ENCODE measurements at regions of chr5 and their contacts with region 1.

Region 1: GRCh38 chr5:113053603-113054002 is 77.0 kb downstream of the DCP2 start:
- DNase-seq: peak; percentile 56 to 82 (median 71)
- H3K4me3 ChIP-seq: no peak overlapping the region
- H3K27ac ChIP-seq: peak overlapping the region in 1 of 2 donors; percentile 20
- H3K4me1 ChIP-seq: peaks cover 6% of the 10 kb centered on the region
- H3K27me3 ChIP-seq: no peaks in the 10 kb centered on the region
- CTCF ChIP-seq: no peak
- EP300 ChIP-seq: no peak
- POLR2A ChIP-seq: no peak

Region 2: DNA sequence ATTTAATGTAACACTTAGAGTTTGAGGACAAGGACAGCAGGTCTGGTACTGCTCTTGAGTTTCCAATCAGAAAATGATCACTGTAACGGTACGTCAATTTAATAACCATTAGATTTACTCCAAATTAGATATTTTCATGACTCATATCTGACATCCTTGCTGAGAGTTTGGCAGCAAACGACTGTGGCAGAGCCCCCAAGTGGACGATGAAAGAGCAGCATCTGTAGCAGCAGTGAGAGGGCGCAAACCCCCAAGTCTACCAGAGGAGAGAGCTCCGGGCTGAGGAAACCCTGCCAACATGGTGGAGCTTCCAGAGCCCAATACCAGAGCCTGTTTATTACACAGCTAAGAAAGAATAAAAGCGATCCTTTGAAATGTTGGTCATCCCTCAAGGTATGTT is 561.3 kb before region 1 on chr5:
- intact Hi-C with region 1: no loop called
- DNase-seq: no peak
- H3K4me3 ChIP-seq: no peak overlapping the region
- H3K27ac ChIP-seq: no peak overlapping the region
- H3K4me1 ChIP-seq: no peaks in the 10 kb centered on the region
- H3K27me3 ChIP-seq: no peaks in the 10 kb centered on the region
- CTCF ChIP-seq: no peak
- EP300 ChIP-seq: no peak
- POLR2A ChIP-seq: no peak

Region 3: DNA sequence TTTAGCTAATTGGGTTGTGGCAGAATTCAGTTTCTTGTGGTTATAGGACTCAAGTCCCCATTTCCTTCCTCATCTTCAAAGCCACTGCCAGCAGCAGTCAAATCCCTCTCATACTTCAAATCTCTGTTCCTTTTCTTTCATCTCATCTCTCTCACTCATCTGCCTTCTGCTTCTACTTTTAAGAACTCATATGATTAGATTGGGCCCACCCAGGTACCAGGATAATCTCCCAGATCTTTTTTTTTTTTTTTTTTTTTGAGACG is 123.6 kb before region 1 on chr5:
- intact Hi-C with region 1: no loop called
- DNase-seq: no peak
- H3K4me3 ChIP-seq: no peak overlapping the region
- H3K27ac ChIP-seq: no peak overlapping the region
- H3K4me1 ChIP-seq: no peaks in the 10 kb centered on the region
- H3K27me3 ChIP-seq: no peaks in the 10 kb centered on the region
- CTCF ChIP-seq: no peak
- EP300 ChIP-seq: no peak
- POLR2A ChIP-seq: no peak

Region 4: DNA sequence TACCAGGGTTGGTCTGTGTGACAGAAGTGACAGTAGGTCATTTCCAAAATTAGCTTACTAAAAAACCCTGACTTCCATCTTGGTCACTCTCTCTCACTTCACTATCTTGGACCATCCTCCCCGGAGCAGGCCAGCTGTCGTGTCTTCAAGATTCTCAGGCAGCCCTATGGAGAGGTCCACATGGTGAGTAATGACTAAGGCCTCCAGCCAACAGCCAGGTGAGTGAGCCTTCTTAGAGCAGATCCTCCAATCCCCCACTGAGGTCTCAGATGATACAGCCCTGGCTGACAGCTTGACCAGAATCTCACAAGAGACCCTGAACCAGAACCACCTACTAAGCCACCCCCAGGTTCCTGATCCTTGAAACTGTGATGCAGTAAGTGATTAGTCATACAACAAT is 15.0 kb after region 1 on chr5:
- intact Hi-C with region 1: loop called in 1 of 4 experiments (anchors 1 kb)
- DNase-seq: peak in 2 of 5 donors; percentile 5 to 15
- H3K4me3 ChIP-seq: no peak overlapping the region
- H3K27ac ChIP-seq: no peak overlapping the region
- H3K4me1 ChIP-seq: peaks cover 4% of the 10 kb centered on the region
- H3K27me3 ChIP-seq: no peaks in the 10 kb centered on the region
- CTCF ChIP-seq: no peak
- EP300 ChIP-seq: no peak
- POLR2A ChIP-seq: no peak

Region 5: GRCh38 chr5:113140837-113141661 is 87.4 kb after region 1 on chr5:
- intact Hi-C with region 1: no loop called
- DNase-seq: no peak
- H3K4me3 ChIP-seq: no peak overlapping the region
- H3K27ac ChIP-seq: no peak overlapping the region
- H3K4me1 ChIP-seq: peaks cover 3% of the 10 kb centered on the region
- H3K27me3 ChIP-seq: no peaks in the 10 kb centered on the region
- CTCF ChIP-seq: no peak
- EP300 ChIP-seq: no peak
- POLR2A ChIP-seq: no peak

Measured in ovary (tissue), 10 donors.